Endothelial cell of umbilical vein (primary cell): ENCODE measurements at regions of chr5 and their contacts with region 1.

Region 1: GRCh38 chr5:72451741-72452505 is 55.3 kb downstream of the ZNF366 start:
- DNase-seq: peak; percentile 98
- H3K4me3 ChIP-seq: no peak overlapping the region
- H3K27ac ChIP-seq: peak overlapping the region; percentile 100
- H3K4me1 ChIP-seq: peaks cover 49% of the 10 kb centered on the region
- H3K27me3 ChIP-seq: no peaks in the 10 kb centered on the region
- CTCF ChIP-seq: no peak
- POLR2A ChIP-seq: peak; percentile 48

Region 2: DNA sequence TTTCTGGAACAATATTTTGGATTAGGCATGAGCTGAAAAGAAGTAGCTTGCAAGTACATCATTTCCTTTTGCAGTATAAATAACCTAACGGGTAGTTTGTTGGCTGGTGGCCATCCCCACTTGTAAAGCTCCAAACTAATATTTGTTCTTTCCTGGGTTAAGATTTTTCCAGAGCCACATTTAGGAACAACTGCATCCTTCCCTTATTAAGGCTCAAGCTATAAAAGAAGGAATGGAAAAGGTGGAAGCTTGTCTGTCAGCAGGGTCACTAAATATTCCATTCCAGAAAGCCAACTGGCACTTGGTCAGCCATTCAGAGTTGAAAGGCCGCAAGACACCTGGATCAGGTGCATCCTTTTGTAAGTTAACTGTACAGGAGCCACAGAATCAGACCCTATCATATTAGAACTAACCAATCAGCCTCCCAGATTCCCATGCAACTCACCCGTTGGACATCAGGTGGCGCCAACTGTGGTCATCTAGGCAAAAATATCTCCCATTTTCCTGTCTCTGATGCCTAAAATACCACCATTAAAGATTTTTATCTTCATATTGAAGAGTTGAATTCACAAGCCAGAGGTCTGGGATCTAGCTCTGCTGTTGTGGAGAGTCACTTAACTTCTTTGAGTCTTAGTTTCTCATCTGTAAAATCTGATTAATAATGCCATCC is 48.8 kb before region 1 on chr5:
- CTCF ChIA-PET with region 1: interaction called, 15 read pairs
- POLR2A ChIA-PET with region 1: no interaction called
- dilution Hi-C with region 1: no loop called
- intact Hi-C with region 1: no loop called
- DNase-seq: peak; percentile 78
- H3K4me3 ChIP-seq: no peak overlapping the region
- H3K27ac ChIP-seq: no peak overlapping the region
- H3K4me1 ChIP-seq: no peaks in the 10 kb centered on the region
- H3K27me3 ChIP-seq: no peaks in the 10 kb centered on the region
- CTCF ChIP-seq: peak; percentile 34 to 35
- POLR2A ChIP-seq: no peak

Region 3: DNA sequence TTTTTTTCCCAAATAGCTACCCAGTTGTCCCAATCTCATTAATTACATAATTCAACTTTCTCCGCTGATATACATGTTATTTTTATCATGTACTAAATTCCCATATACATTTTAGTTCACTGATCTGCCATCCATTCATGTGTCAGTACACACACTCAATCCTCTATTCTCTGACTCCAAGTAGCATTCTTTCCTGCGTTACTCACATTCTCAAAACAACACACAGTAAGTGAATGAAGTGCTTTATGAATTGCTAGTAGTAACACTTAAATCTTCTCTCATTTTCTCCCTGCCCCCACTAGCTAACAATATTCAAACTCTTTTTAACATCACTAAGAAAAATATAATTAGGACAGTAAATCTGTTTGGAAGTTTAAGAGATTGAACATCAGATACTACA is 46.4 kb after region 1 on chr5:
- CTCF ChIA-PET with region 1: no interaction called
- POLR2A ChIA-PET with region 1: no interaction called
- dilution Hi-C with region 1: no loop called
- intact Hi-C with region 1: loop called (anchors 2 kb)
- DNase-seq: peak; percentile 67
- H3K4me3 ChIP-seq: no peak overlapping the region
- H3K27ac ChIP-seq: no peak overlapping the region
- H3K4me1 ChIP-seq: peaks cover 22% of the 10 kb centered on the region
- H3K27me3 ChIP-seq: no peaks in the 10 kb centered on the region
- CTCF ChIP-seq: no peak
- POLR2A ChIP-seq: no peak

Region 4: DNA sequence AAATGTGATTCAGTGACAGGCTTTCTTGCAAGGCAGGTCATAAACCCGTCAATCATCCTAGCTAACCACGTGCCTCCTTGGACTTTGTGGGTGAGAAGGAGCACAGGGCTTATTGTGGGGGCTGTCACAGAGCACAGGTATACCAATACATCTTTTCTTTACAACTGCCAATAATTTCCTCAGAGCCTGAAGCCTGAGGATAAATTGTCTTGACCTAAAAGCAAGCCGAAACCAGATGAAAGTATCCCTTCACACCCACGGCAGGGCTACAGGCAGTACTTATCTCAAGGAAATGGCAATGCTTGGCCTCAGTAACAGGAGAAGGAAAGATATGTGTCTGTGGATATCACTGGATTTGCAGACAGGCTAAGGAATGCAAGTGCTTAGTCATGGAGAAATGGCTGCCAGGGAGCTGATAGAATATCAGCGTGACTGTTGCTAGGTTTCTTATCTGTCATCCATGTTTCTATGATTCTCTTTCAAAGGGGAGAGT is 145.6 kb after region 1 on chr5:
- CTCF ChIA-PET with region 1: no interaction called
- POLR2A ChIA-PET with region 1: no interaction called
- dilution Hi-C with region 1: no loop called
- intact Hi-C with region 1: loop called (anchors 2 kb)
- DNase-seq: peak; percentile 94
- H3K4me3 ChIP-seq: no peak overlapping the region
- H3K27ac ChIP-seq: peak overlapping the region; percentile 88
- H3K4me1 ChIP-seq: peaks cover 60% of the 10 kb centered on the region
- H3K27me3 ChIP-seq: no peaks in the 10 kb centered on the region
- CTCF ChIP-seq: no peak
- POLR2A ChIP-seq: no peak

Region 5: GRCh38 chr5:72816311-72817145 is 364.6 kb after region 1 on chr5 and contains the start of gene TNPO1:
- CTCF ChIA-PET with region 1: interaction called, 3 read pairs
- POLR2A ChIA-PET with region 1: no interaction called
- dilution Hi-C with region 1: no loop called
- intact Hi-C with region 1: loop called (anchors 2 kb)
- DNase-seq: peak; percentile 96
- H3K4me3 ChIP-seq: peak within 1 kb of the TSS; percentile 92 to 100 (median 100)
- H3K27ac ChIP-seq: peak within 1 kb of the TSS; percentile 98
- H3K4me1 ChIP-seq: peaks cover 43% of the 10 kb centered on the region
- H3K27me3 ChIP-seq: no peaks in the 10 kb centered on the region
- CTCF ChIP-seq: no peak
- POLR2A ChIP-seq: peak; percentile 99
- total RNA-seq, gene TNPO1: 242 and 298 TPM in 2 replicates